Natural killer cell (primary cell): ENCODE measurements at regions of chr3 and their contacts with region 1.

Region 1: GRCh38 chr3:30628901-30629590 is 22.6 kb downstream of the TGFBR2 start:
- DNase-seq: peak in 1 of 2 donors; percentile 73
- ATAC-seq: peak; percentile 10 to 52 (median 24)
- H3K4me3 ChIP-seq: no peak overlapping the region
- H3K4me3 Mint-ChIP-seq: peak overlapping the region; percentile 80
- H3K27ac ChIP-seq: peak overlapping the region; percentile 90
- H3K27ac Mint-ChIP-seq: peak overlapping the region; percentile 84 to 98
- H3K4me1 ChIP-seq: peaks cover 46% of the 10 kb centered on the region
- H3K4me1 Mint-ChIP-seq: peaks cover 66 to 71% of the 10 kb centered on the region in 2 donors
- H3K27me3 ChIP-seq: no peaks in the 10 kb centered on the region
- H3K27me3 Mint-ChIP-seq: no peaks in the 10 kb centered on the region
- CTCF ChIP-seq: no peak

Region 2: GRCh38 chr3:30611613-30612436 is 17.2 kb before region 1 on chr3:
- intact Hi-C with region 1: loop called (anchors 2 kb)
- DNase-seq: peak in 1 of 2 donors; percentile 63
- ATAC-seq: peak; percentile 36 to 63 (median 63)
- H3K4me3 ChIP-seq: peak overlapping the region; percentile 2
- H3K4me3 Mint-ChIP-seq: peak overlapping the region; percentile 97
- H3K27ac ChIP-seq: peak overlapping the region; percentile 81
- H3K27ac Mint-ChIP-seq: peak overlapping the region; percentile 91 to 92
- H3K4me1 ChIP-seq: peaks cover 46% of the 10 kb centered on the region
- H3K4me1 Mint-ChIP-seq: peaks cover 83 to 85% of the 10 kb centered on the region in 2 donors
- H3K27me3 ChIP-seq: no peaks in the 10 kb centered on the region
- H3K27me3 Mint-ChIP-seq: no peaks in the 10 kb centered on the region
- CTCF ChIP-seq: no peak

Region 3: DNA sequence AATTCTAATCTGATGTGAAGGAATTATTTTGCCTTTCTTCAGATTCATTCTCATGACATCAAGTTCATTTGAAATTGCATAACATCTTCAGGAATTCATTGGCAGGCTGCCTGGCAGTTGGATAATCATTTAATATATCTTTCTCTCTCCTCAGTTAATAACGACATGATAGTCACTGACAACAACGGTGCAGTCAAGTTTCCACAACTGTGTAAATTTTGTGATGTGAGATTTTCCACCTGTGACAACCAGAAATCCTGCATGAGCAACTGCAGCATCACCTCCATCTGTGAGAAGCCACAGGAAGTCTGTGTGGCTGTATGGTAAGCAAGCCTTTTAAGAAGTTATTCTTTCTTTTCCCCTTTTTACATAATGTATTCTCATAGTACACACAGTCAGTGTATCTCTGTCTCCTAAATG is 15.6 kb after region 1 on chr3:
- intact Hi-C with region 1: loop called (anchors 1 kb)
- DNase-seq: peak; percentile 47 to 81
- ATAC-seq: peak; percentile 51 to 66 (median 63)
- H3K4me3 ChIP-seq: no peak overlapping the region
- H3K4me3 Mint-ChIP-seq: peak overlapping the region; percentile 62
- H3K27ac ChIP-seq: peak overlapping the region; percentile 94
- H3K27ac Mint-ChIP-seq: peak overlapping the region; percentile 75 to 84
- H3K4me1 ChIP-seq: peaks cover 67% of the 10 kb centered on the region
- H3K4me1 Mint-ChIP-seq: peaks cover 81 to 96% of the 10 kb centered on the region in 2 donors
- H3K27me3 ChIP-seq: no peaks in the 10 kb centered on the region
- H3K27me3 Mint-ChIP-seq: no peaks in the 10 kb centered on the region
- CTCF ChIP-seq: no peak

Region 4: DNA sequence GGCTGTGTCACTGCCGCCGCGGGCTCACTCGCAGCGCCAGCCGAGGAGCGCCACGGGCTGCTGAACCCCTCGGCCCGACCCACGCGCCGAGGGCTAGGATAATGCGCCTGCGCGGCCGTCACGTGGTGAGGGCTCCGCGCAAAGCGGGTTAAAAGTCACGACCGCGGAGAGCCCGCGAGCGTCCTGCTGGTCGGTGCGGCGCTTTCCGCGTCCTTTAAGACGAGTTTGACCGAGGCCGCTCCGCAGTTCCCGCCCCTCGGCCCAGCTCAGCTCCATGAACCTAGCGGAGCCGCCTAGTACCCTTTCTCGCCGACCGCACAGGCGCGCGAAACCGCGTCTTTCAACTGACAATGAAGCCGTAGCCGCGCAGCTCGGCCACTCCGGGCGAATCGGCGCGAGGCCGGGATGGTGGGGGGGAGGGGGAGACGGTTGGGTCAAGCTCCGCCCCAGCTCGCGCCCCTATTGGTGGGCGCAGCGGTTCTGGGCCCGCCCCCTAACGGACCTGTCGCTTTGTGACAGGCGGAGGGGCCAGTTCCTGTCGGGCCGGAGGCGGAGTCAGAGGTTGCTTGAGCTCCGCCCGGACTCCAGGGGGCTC is 903.0 kb after region 1 on chr3:
- intact Hi-C with region 1: loop called (anchors 5 kb)
- DNase-seq: peak; percentile 97 to 99
- ATAC-seq: peak; percentile 84 to 95 (median 85)
- H3K4me3 ChIP-seq: peak overlapping the region; percentile 97
- H3K4me3 Mint-ChIP-seq: peak overlapping the region; percentile 99
- H3K27ac ChIP-seq: peak overlapping the region; percentile 96
- H3K27ac Mint-ChIP-seq: peak overlapping the region; percentile 94 to 99
- H3K4me1 ChIP-seq: peaks cover 6% of the 10 kb centered on the region
- H3K4me1 Mint-ChIP-seq: peaks cover 30 to 33% of the 10 kb centered on the region in 2 donors
- H3K27me3 ChIP-seq: no peaks in the 10 kb centered on the region
- H3K27me3 Mint-ChIP-seq: no peaks in the 10 kb centered on the region
- CTCF ChIP-seq: no peak